ENCODE measurements at regions of chr11 and their contacts with region 1.

Region 1: DNA sequence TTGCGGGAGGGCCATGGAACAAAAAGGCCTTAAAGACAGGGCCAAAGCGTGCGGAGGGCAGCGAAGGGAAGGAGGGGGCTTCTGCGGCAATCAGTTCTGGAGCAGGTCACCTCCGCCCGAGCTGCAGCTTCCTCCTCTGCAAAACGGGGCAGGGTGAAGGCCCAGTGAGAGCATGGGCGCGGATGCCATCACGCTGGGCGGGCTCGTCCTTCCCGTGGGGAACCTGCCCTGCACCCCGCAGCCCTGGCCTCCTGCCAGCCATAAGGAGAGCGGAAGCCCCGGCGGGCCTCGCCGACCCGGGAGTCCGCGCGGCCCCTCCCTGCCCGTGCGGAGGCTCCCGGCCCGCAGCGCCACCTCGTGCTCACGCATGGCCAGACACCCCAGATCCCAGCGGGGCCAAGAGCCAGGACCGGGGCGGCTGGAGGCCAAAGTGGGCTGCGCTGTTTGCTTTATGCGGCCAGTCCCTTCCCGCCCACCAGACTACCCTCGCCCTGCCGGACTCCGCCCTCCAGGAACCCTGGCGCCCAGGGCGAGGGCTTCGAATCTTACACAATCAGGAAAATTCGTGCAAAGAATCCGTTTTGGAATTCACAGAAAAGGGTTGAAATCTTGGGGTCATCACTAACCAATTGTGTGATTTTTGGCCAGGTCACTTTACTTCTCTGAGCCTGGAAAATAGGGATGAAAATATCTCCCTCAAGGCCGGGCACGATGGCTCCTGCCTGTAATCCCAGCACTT is 16.1 kb downstream of the TSKU start:
- DNase-seq: peak; percentile 93

Region 2: GRCh38 chr11:76670485-76671236 is 128.6 kb before region 1 on chr11 and contains the start of gene LRRC32:
- intact Hi-C with region 1: no loop called
- DNase-seq: peak; percentile 86
- total RNA-seq, gene LRRC32: 33.5 TPM

Region 3: GRCh38 chr11:76714499-76714898 is 84.7 kb before region 1 on chr11:
- intact Hi-C with region 1: no loop called
- DNase-seq: no peak

Region 4: DNA sequence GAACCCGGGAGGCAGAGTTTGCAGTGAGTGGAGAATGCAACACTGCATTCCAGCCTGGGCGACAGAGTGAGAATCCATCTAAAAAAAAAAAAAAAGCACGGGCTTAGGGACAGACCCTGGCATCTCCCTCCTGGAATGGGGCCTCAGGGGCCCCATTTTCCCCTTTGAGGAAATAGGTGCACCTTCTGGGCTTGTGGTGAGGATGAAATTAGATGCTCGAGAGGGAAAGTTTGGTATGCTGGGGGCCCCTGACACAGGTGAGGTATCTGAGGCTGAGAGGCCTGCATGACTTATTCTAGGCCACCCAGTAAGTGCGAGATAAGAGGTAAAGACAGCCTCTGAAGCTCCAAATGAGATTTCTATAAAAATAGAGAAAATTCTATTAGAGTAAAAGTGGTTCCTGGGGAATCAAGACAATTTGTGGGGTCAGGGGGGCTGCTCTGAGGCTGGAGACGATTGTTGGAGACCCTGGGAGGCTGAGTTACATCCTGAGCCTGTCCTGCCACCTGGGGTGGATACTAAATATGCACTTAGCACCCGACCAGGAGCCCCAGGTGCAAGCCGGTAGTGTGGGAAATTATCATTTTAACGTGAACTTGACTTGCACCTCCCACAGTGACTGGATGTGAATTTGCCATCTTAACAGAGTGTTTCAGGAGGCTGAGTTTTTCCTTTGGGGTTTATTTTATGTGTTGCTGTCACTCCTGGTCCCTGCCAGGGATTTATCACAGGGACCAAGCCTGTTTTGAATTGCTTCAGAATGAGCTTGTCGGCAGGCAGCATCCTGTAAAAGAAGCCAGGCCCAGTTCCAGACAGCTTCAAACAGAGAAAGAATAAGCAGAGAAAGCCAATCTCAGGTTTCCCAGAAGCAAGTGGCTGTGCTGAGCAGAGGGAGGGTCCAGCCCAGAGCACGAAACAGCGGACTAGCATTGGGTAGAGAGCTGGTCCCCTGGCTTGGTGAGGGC is 64.5 kb before region 1 on chr11:
- intact Hi-C with region 1: loop called (anchors 1 kb)
- DNase-seq: no peak